BJ (cell line): ENCODE measurements at regions of chr10 and their contacts with region 1.

Region 1: DNA sequence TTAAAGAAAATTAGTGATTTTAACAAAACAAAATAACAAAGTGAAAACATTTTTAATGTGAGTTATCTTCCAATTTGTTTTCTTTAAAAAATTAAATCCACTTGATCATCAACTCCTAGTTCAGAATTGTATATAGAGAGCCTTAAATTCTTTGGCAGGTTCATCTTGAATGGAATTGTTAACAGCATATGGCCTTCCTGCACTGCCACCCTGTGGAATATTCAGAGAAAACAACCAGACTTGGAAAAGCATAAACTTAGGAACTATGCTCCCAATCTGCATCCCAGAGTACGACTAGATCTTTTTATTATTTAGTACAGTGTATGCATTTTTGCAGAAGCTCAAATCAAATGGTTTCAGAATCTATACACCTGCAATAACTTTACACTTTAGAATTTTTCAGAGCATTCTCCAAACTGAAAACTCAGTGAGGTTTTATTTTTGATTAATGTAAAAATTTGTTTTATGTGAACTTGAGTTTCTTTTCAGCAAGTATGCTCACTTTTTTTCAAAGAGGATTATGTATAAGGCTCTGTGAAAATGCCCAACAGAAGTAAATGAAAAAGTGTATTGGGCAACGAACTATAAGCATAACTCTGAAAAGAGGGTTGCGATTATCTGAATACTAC is 44.9 kb upstream of the ANK3 start:
- DNase-seq: no peak
- H3K4me3 ChIP-seq: no peak overlapping the region
- H3K27me3 ChIP-seq: 0 out of 2 replicates have a peak, but pooled peaks cover 1% of the 10 kb centered on the region
- CTCF ChIP-seq: peak; percentile 57

Region 2: DNA sequence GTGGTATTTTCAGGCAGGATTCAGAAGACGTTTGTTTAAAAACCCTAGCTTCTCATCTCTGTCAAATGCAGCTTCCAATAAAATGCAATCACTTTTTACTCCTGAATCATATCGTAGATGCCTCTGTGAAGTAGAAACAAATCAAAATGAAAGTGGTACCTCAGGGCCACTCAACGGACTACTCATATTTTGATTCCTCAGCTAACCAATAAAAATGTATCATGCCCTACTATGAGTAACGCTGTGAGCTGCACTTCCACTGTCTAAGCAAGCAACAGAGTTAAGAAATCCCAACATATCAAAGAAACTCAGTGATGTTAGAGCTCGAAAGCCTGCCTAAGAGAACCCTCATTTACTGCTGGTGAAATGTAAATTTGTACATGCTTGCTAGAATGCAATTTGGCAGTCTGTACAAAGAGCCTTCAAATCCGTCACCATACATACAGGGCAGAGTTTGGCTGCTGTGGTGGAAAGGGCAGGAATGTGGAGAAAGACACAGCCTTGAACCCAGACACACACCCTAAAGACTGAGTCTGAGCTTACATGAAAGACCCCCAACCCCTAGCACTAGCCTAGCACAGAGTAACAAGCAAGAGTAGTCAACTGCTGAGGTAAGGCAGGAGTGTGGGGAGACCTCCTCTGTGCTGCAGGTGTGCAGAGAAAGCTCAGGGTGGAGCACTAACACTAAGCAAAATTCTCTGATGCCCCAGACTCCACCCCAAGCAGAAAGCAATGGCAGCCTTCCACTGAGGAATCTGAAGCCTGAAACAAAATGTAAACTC is 196.4 kb before region 1 on chr10:
- CTCF ChIA-PET with region 1: interaction called, 31 read pairs
- POLR2A ChIA-PET with region 1: no interaction called
- DNase-seq: no peak
- H3K4me3 ChIP-seq: no peak overlapping the region
- H3K27me3 ChIP-seq: no peaks in the 10 kb centered on the region
- CTCF ChIP-seq: peak; percentile 49

Region 3: DNA sequence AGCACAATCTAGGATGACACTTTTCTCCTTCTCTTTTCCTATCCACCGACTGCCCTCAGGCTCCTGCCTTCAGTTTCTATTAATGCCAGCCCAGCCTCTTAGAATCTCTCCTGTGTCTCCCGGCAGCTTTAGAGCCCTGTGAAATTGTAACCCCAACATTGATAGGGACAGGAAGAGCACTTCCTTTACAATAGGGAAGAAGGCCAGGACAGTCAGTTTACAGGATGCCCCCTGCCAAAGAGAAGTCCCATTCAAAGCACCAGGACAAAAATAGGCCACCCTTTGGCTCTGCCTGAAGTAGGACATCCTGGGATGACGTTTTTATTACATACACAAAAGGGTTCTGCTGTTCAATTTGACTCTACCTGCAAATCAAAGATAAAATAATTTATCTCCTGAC is 19.8 kb after region 1 on chr10:
- CTCF ChIA-PET with region 1: no interaction called
- POLR2A ChIA-PET with region 1: no interaction called
- DNase-seq: no peak
- H3K4me3 ChIP-seq: no peak overlapping the region
- H3K27me3 ChIP-seq: no peaks in the 10 kb centered on the region
- CTCF ChIP-seq: no peak

Region 4: DNA sequence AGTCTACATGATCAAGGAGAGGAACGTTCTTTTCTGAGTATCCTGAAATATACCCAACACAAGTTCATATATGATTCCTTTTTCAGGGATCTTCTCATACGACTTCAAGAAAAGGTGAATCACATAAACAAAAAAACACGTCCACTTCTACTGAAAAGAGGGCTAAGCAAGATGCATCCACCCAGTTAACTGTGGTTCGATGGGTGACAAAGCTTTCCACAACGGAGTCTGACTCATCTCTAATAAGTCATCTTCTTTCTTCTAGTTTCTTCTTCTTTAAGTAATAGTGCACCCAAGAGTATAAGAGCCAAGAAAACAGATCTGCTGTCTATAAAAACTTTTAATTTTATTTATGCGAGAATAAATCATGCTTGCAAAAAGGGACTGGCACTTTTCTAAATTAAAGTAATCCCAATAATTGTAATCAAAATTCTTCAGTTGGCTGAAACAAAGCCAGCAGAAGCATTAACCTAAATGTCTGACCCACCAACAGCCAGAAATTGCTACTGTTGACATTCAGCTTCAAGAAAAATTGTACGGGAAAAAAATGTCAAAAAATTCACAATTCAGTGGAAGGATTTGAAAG is 102.1 kb after region 1 on chr10:
- CTCF ChIA-PET with region 1: no interaction called
- POLR2A ChIA-PET with region 1: no interaction called
- DNase-seq: peak; percentile 7
- H3K4me3 ChIP-seq: no peak overlapping the region
- H3K27me3 ChIP-seq: no peaks in the 10 kb centered on the region
- CTCF ChIP-seq: no peak